SK-N-SH (cell line): ENCODE measurements at regions of chr16 and their contacts with region 1.

Region 1: GRCh38 chr16:67928561-67929364 is 2.9 kb downstream of the CTRL start:
- DNase-seq: peak; percentile 90
- H3K4me3 ChIP-seq: no peak overlapping the region; a peak in 1 of 4 replicates
- H3K27ac ChIP-seq: no peak overlapping the region
- H3K4me1 ChIP-seq: peaks cover 0 to 2% of the 10 kb centered on the region in 2 experiments; a peak in 1 of 4 replicates
- H3K27me3 ChIP-seq: no peaks in the 10 kb centered on the region
- CTCF ChIP-seq: peak; percentile 86
- EP300 ChIP-seq: no peak
- RAD21 ChIP-seq: peak; percentile 91

Region 2: GRCh38 chr16:67892899-67893742 is 35.6 kb before region 1 on chr16 and contains the start of gene PSKH1:
- CTCF ChIA-PET with region 1: interaction called, 564 read pairs
- POLR2A ChIA-PET with region 1: no interaction called
- DNase-seq: peak; percentile 100
- H3K4me3 ChIP-seq: peak within 1 kb of the TSS; percentile 80 to 97
- H3K27ac ChIP-seq: peak within 1 kb of the TSS; percentile 68 to 69
- H3K4me1 ChIP-seq: peaks cover 10 to 11% of the 10 kb centered on the region in 2 experiments; a peak in 2 of 4 replicates
- H3K27me3 ChIP-seq: no peaks in the 10 kb centered on the region
- CTCF ChIP-seq: no peak
- EP300 ChIP-seq: peak in 1 of 2 experiments; percentile 53; a peak in 1 of 4 replicates
- RAD21 ChIP-seq: no peak
- polyA plus RNA-seq, gene PSKH1: 30.1 and 31.4 TPM in 2 replicates

Region 3: GRCh38 chr16:67910158-67910557 is 18.6 kb before region 1 on chr16:
- CTCF ChIA-PET with region 1: interaction called, 11 read pairs
- POLR2A ChIA-PET with region 1: no interaction called
- DNase-seq: peak; percentile 71
- H3K4me3 ChIP-seq: no peak overlapping the region
- H3K27ac ChIP-seq: peak overlapping the region in 1 of 2 experiments; percentile 47; a peak in 2 of 4 replicates
- H3K4me1 ChIP-seq: peaks cover 0 to 28% of the 10 kb centered on the region in 2 experiments; a peak in 1 of 4 replicates
- H3K27me3 ChIP-seq: no peaks in the 10 kb centered on the region
- CTCF ChIP-seq: no peak
- EP300 ChIP-seq: no peak
- RAD21 ChIP-seq: peak; percentile 48

Region 4: DNA sequence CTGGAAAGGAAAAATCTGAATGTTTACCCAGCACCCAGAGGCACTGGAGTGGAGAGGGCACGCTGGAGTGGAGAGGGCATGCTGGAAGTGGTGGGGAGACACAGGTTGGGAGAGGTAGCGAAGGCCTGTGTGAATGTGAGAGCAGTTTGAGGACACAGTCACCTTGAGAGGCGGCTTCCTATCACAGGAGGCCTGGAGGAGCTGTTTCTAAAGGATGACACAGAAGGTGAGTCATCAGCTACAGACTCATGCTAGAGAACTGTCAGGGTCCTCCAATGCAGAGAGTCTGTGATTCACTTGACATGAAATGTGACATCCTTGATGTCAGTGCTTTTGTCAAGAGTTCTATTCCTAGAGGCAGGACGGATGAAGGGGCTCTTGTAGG is 10.9 kb before region 1 on chr16:
- CTCF ChIA-PET with region 1: interaction called, 12 read pairs
- POLR2A ChIA-PET with region 1: interaction called, 3 read pairs
- DNase-seq: no peak
- H3K4me3 ChIP-seq: no peak overlapping the region
- H3K27ac ChIP-seq: peak overlapping the region; percentile 80 to 82
- H3K4me1 ChIP-seq: peaks cover 14 to 69% of the 10 kb centered on the region in 2 experiments; a peak in 3 of 4 replicates
- H3K27me3 ChIP-seq: no peaks in the 10 kb centered on the region
- CTCF ChIP-seq: no peak
- EP300 ChIP-seq: no peak
- RAD21 ChIP-seq: no peak